Body of pancreas (tissue), 4 donors: ENCODE measurements at regions of chr7 and their contacts with region 1.

Region 1: DNA sequence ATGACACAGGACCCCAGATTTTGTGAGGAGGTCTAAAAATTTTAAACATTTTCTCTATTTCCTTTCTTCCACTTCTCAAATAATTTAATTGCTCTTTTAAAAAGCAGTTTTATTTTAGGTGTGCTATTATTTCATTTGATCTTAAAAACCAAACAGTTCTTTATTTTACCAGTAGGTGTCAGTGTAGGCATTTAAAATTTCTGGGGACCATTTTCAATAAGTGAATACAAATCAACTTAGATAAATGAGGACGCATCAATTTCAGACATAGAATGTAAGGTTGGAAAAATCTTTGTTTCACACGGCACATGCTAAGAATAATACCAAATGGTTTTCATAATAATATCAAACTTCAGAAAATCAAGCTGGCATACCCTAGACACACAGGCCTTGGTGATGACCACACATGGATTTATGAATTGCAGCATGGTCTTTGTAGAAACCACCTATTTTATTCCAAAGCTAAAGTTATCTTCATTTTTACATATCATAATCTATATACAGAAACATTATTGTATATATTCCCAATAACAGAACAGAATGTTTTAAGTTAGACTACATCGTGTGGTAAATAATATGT is 127.6 kb upstream of the SLC26A5 start:
- DNase-seq: no peak
- ATAC-seq: no peak
- H3K4me3 ChIP-seq: no peak overlapping the region
- H3K27ac ChIP-seq: no peak overlapping the region
- H3K4me1 ChIP-seq: no peaks in the 10 kb centered on the region
- H3K27me3 ChIP-seq: no peaks in the 10 kb centered on the region
- CTCF ChIP-seq: peak; percentile 40 to 81 (median 75)
- POLR2A ChIP-seq: no peak

Region 2: GRCh38 chr7:104156842-104157277 is 583.3 kb after region 1 on chr7:
- intact Hi-C with region 1: loop called (anchors 10 kb)
- DNase-seq: no peak
- ATAC-seq: no peak
- H3K4me3 ChIP-seq: no peak overlapping the region
- H3K27ac ChIP-seq: no peak overlapping the region
- H3K4me1 ChIP-seq: no peaks in the 10 kb centered on the region
- H3K27me3 ChIP-seq: no peaks in the 10 kb centered on the region
- CTCF ChIP-seq: peak in 6 of 7 experiments; percentile 38 to 57 (median 52)
- POLR2A ChIP-seq: no peak